ENCODE measurements at regions of chr16 and their contacts with region 1.

Region 1: GRCh38 chr16:75074920-75075687 is 41.5 kb downstream of the LDHD start:
- DNase-seq: peak; percentile 61 to 93 (median 84)
- ATAC-seq: peak; percentile 94
- H3K4me3 ChIP-seq: no peak overlapping the region
- H3K4me3 Mint-ChIP-seq: peak overlapping the region; percentile 62
- H3K27ac ChIP-seq: no peak overlapping the region
- H3K27ac Mint-ChIP-seq: peak overlapping the region; percentile 72
- H3K4me1 ChIP-seq: peaks cover 28% of the 10 kb centered on the region
- H3K4me1 Mint-ChIP-seq: peaks cover 56% of the 10 kb centered on the region
- H3K27me3 ChIP-seq: peaks cover 0 to 3% of the 10 kb centered on the region in 2 experiments
- H3K27me3 Mint-ChIP-seq: no peaks in the 10 kb centered on the region
- CTCF ChIP-seq: no peak

Region 2: DNA sequence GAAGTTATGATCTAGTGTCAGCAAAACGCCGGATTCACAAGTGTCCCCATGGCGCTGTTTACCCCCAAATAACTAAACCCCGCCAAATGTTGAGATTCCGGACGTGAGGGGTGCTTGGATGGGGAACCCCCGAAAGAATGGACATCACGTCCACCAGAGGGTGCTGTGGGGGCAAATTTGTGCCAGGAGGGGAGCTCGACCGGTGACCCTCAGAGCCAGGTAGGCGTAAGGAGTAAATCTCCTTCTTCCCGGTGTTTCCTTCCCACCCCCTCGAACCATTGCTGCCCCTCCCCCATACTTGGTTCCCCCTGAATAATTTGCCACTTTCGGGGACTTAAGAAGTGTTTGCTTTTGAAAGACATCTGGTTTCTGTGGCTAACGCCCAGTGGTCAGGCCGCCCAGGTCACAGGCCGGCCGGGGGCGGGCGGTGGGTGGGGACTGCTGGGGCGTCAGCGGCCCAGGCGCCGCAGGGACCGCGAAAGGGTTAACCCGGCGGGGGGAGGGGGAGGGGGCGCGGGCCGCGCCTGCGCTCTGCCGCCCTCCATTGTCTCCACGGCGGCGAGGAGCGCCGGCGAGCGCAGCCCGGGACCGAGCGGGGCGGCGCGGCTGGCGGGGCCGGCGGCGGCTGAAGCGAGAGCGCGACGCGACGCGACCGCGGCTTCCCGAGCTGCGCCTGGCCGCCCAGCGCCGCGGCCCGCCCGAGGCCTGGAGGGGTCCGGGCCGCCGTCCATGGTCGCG is 76.5 kb before region 1 on chr16 and contains the start of gene ZNRF1:
- CTCF ChIA-PET with region 1: interaction called, 4 read pairs
- POLR2A ChIA-PET with region 1: no interaction called
- intact Hi-C with region 1: loop called (anchors 2 kb)
- DNase-seq: peak; percentile 61 to 89 (median 79)
- ATAC-seq: peak; percentile 82
- H3K4me3 ChIP-seq: peak within 1 kb of the TSS; percentile 58 to 79
- H3K4me3 Mint-ChIP-seq: peak within 1 kb of the TSS; percentile 90
- H3K27ac ChIP-seq: peak within 1 kb of the TSS in 1 of 2 experiments; percentile 37
- H3K27ac Mint-ChIP-seq: peak within 1 kb of the TSS; percentile 85
- H3K4me1 ChIP-seq: peaks cover 20% of the 10 kb centered on the region
- H3K4me1 Mint-ChIP-seq: peaks cover 15% of the 10 kb centered on the region
- H3K27me3 ChIP-seq: peaks cover 0 to 7% of the 10 kb centered on the region in 2 experiments
- H3K27me3 Mint-ChIP-seq: no peaks in the 10 kb centered on the region
- CTCF ChIP-seq: peak; percentile 60
- total RNA-seq, gene ZNRF1: 1.7 to 2.0 TPM

Region 3: DNA sequence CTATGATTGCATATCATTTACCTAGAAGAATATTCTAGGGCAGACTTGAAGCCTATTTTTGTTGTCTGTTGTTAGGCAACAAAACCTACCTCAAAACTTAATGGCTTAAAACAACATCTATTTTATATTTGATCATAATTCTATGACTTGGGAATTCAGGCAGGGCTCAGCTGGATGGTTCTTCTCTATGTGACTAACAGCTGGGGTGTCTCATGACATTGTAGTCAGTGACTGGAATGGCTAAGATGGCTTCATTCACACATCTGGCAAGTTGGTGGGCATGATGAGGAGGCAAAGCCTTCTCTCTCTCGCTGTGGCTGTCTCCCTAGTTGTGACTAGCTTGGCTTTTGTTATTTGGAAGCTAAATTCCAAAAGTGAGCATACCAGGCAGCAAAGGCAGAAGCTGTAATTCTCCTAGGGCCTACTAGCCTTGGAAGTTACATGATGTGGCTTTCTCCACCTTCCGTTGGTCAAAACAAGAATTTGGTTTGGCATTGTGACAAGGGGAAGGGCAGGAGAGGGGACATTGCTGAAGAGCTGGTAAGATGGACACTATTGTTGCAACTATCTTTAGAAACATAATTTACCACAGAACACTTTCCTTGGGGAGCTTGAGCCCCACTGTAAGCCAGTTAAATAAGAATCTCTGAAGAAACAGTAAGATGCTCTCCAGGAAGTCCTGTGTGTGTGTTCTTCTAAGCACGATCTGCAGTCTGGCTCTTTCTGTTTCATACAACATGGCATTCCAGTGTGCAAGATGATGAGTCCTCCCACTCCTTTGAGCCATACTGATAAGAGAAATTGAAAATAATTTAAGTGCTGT is 36.9 kb before region 1 on chr16:
- CTCF ChIA-PET with region 1: no interaction called
- POLR2A ChIA-PET with region 1: no interaction called
- intact Hi-C with region 1: loop called in 1 of 2 experiments (anchors 5 kb)
- DNase-seq: peak in 1 of 9 experiments; percentile 13
- ATAC-seq: no peak
- H3K4me3 ChIP-seq: no peak overlapping the region
- H3K4me3 Mint-ChIP-seq: no peak overlapping the region
- H3K27ac ChIP-seq: no peak overlapping the region
- H3K27ac Mint-ChIP-seq: no peak overlapping the region
- H3K4me1 ChIP-seq: no peaks in the 10 kb centered on the region
- H3K4me1 Mint-ChIP-seq: peaks cover 10% of the 10 kb centered on the region
- H3K27me3 ChIP-seq: no peaks in the 10 kb centered on the region
- H3K27me3 Mint-ChIP-seq: no peaks in the 10 kb centered on the region
- CTCF ChIP-seq: no peak

Region 4: DNA sequence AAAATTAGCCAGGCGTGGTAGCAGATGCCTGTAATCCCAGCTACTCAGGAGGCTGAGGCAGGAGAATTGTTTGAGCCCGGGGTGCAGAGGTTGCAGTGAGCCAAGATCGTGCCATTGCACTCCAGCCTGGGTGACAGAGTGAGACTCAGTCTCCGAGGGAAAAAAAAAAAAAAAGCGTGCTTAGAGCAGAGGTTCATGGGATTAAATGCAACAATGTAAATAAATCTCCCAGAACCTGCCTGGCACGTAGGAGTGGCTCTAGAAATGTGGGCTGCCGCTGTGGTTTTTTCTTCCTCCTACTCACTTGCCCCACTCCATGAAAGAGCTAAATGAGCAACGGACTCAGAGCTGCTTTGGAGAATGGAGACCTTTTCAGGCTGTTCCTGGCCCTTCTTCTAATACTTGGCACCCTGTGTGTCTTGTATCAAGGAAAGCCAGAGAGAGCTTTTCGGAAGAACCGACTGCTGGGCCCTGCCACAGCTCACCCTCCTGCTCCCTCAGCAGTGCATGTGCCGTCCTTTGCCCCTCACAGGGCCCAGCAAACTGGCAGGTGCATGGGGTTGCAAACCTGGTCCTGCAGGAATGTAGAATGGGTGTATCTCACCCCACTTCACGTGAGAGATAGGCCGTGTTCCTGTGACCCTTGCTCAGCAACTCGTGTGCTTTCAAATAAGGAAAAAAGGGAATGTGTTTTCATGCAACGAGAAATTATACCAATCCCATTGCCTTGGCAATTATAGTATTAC is 10.5 kb before region 1 on chr16:
- CTCF ChIA-PET with region 1: interaction called, 4 read pairs
- POLR2A ChIA-PET with region 1: interaction called, 11 read pairs
- intact Hi-C with region 1: no loop called
- DNase-seq: peak in 5 of 9 experiments; percentile 15 to 56 (median 27)
- ATAC-seq: peak; percentile 32
- H3K4me3 ChIP-seq: peak overlapping the region; percentile 26 to 27
- H3K4me3 Mint-ChIP-seq: peak overlapping the region; percentile 76
- H3K27ac ChIP-seq: peak overlapping the region in 1 of 2 experiments; percentile 30
- H3K27ac Mint-ChIP-seq: peak overlapping the region; percentile 90
- H3K4me1 ChIP-seq: peaks cover 26% of the 10 kb centered on the region
- H3K4me1 Mint-ChIP-seq: peaks cover 42% of the 10 kb centered on the region
- H3K27me3 ChIP-seq: peaks cover 0 to 2% of the 10 kb centered on the region in 2 experiments
- H3K27me3 Mint-ChIP-seq: no peaks in the 10 kb centered on the region
- CTCF ChIP-seq: no peak

Region 5: DNA sequence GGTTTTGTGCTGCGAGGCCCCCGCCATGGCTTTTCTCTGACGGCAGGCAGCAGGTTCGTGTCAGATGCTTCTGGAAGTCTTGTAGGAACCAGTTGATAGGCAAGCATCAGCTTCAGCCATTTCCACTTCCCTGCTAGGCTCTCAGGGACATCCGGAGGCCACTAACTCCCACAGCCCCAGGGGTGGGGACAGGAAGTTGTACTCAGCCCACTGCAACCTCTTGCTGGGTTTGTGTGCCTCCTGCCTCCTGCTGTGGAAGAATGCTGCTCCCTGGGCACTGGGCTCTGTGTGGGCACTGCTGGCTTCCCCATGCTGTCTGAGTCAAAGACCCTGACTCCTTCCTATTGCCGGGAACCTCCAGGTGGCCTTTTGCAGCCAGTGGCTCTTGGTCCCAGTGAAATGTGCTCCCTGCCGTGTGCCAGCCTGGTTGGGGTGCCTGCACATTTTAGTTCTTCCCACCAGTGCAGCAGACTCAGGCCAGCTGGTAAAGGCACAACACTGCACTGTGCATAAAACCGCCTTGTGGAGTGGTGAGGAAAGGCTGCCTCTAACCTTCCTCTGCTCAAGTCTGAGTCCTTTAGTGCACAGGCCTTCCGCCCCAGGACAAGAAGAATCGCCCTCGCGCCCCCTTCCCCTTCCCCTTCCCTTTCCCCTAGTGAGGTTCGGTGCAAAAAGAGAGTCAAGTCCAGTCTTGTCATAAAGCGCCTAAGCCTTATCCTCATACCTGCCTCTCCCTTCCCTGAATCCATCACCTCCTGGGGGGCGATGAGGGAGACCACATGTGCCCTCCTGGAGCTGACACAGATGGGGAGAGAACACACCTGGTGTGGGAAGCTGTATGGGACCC is 24.9 kb after region 1 on chr16:
- CTCF ChIA-PET with region 1: interaction called, 4 read pairs
- POLR2A ChIA-PET with region 1: no interaction called
- intact Hi-C with region 1: loop called (anchors 1 to 2 kb)
- DNase-seq: peak in 6 of 9 experiments; percentile 27 to 63 (median 46)
- ATAC-seq: peak; percentile 16
- H3K4me3 ChIP-seq: no peak overlapping the region
- H3K4me3 Mint-ChIP-seq: peak overlapping the region; percentile 37
- H3K27ac ChIP-seq: peak overlapping the region in 1 of 2 experiments; percentile 48
- H3K27ac Mint-ChIP-seq: peak overlapping the region; percentile 69
- H3K4me1 ChIP-seq: peaks cover 29% of the 10 kb centered on the region
- H3K4me1 Mint-ChIP-seq: peaks cover 39% of the 10 kb centered on the region
- H3K27me3 ChIP-seq: no peaks in the 10 kb centered on the region
- H3K27me3 Mint-ChIP-seq: no peaks in the 10 kb centered on the region
- CTCF ChIP-seq: no peak

Region 6: GRCh38 chr16:75148311-75149195 is 73.4 kb after region 1 on chr16 and contains the start of gene ZFP1:
- CTCF ChIA-PET with region 1: no interaction called
- POLR2A ChIA-PET with region 1: no interaction called
- intact Hi-C with region 1: loop called in 1 of 2 experiments (anchors 2 kb)
- DNase-seq: peak; percentile 86 to 98 (median 95)
- ATAC-seq: peak; percentile 89
- H3K4me3 ChIP-seq: peak within 1 kb of the TSS; percentile 85 to 100
- H3K4me3 Mint-ChIP-seq: peak within 1 kb of the TSS; percentile 87
- H3K27ac ChIP-seq: peak within 1 kb of the TSS; percentile 84
- H3K27ac Mint-ChIP-seq: peak within 1 kb of the TSS; percentile 88
- H3K4me1 ChIP-seq: peaks cover 12% of the 10 kb centered on the region
- H3K4me1 Mint-ChIP-seq: peaks cover 16% of the 10 kb centered on the region
- H3K27me3 ChIP-seq: no peaks in the 10 kb centered on the region
- H3K27me3 Mint-ChIP-seq: no peaks in the 10 kb centered on the region
- CTCF ChIP-seq: no peak
- total RNA-seq, gene ZFP1: 11.9 to 12.9 TPM

Region 7: GRCh38 chr16:75265845-75266701 is 191.0 kb after region 1 on chr16:
- CTCF ChIA-PET with region 1: no interaction called
- POLR2A ChIA-PET with region 1: no interaction called
- intact Hi-C with region 1: no loop called
- DNase-seq: no peak
- ATAC-seq: no peak
- H3K4me3 ChIP-seq: peak overlapping the region; percentile 27 to 31
- H3K4me3 Mint-ChIP-seq: peak overlapping the region; percentile 81
- H3K27ac ChIP-seq: no peak overlapping the region
- H3K27ac Mint-ChIP-seq: no peak overlapping the region
- H3K4me1 ChIP-seq: peaks cover 6% of the 10 kb centered on the region
- H3K4me1 Mint-ChIP-seq: peaks cover 10% of the 10 kb centered on the region
- H3K27me3 ChIP-seq: peaks cover 6 to 11% of the 10 kb centered on the region in 2 experiments
- H3K27me3 Mint-ChIP-seq: peaks cover 42% of the 10 kb centered on the region
- CTCF ChIP-seq: no peak

Measured in CD8-positive, alpha-beta T cell (primary cell).